T-cell (primary cell): ENCODE measurements at regions of chr3 and their contacts with region 1.

Region 1: DNA sequence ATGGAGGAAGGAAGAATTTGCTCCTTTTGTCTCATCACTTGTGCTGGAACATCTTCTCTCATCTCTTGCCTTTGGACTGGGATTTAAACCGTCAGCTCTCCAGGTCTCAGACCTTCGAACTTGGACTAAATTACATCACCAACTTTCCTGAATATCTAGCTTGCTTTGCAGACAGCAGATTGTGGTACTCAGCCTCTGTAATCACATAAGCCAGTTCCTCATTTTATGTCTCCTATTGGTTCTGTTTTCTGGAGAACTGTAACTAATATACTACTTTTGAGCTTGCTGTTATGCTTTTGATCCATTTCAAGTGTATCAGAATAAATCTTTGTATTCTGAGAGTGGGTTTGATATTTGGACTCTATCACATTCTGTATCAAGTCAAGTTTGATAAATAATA is 164.3 kb upstream of the VEPH1 start:
- DNase-seq: no peak
- ATAC-seq: no peak
- H3K4me3 ChIP-seq: no peak overlapping the region
- H3K4me3 Mint-ChIP-seq: no peak overlapping the region
- H3K27ac ChIP-seq: no peak overlapping the region
- H3K27ac Mint-ChIP-seq: no peak overlapping the region
- H3K4me1 ChIP-seq: no peaks in the 10 kb centered on the region
- H3K4me1 Mint-ChIP-seq: no peaks in the 10 kb centered on the region
- H3K27me3 ChIP-seq: no peaks in the 10 kb centered on the region
- H3K27me3 Mint-ChIP-seq: peaks cover 0 to 3% of the 10 kb centered on the region in 2 donors

Region 2: DNA sequence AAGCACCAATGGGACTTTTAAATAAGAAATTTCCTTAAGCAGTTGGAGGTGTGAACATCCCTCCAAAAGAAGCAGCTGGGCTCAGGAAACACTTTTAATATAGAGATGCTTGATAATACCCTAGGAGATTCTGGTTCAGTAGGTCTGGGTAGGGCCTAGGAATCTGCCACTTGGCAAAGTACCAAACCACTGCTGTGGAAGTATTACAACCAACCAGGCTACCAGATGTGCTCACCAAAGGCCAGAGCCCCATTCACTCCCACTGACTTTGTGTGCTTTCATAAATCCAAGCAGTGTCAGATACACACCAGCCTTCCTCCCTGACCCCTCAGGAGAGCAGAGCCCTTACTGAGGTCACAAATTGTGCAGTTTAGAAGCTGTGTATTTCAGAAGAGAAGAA is 670.1 kb before region 1 on chr3:
- CTCF ChIA-PET with region 1: no interaction called
- POLR2A ChIA-PET with region 1: no interaction called
- DNase-seq: no peak
- ATAC-seq: no peak
- H3K4me3 ChIP-seq: no peak overlapping the region
- H3K4me3 Mint-ChIP-seq: no peak overlapping the region
- H3K27ac ChIP-seq: no peak overlapping the region
- H3K27ac Mint-ChIP-seq: no peak overlapping the region
- H3K4me1 ChIP-seq: no peaks in the 10 kb centered on the region
- H3K4me1 Mint-ChIP-seq: no peaks in the 10 kb centered on the region
- H3K27me3 ChIP-seq: peaks cover 0 to 4% of the 10 kb centered on the region in 2 experiments
- H3K27me3 Mint-ChIP-seq: peaks cover 3 to 15% of the 10 kb centered on the region in 2 donors

Region 3: GRCh38 chr3:157683660-157684059 is 16.2 kb after region 1 on chr3:
- CTCF ChIA-PET with region 1: no interaction called
- POLR2A ChIA-PET with region 1: no interaction called
- DNase-seq: no peak
- ATAC-seq: no peak
- H3K4me3 ChIP-seq: no peak overlapping the region
- H3K4me3 Mint-ChIP-seq: no peak overlapping the region
- H3K27ac ChIP-seq: no peak overlapping the region
- H3K27ac Mint-ChIP-seq: no peak overlapping the region
- H3K4me1 ChIP-seq: no peaks in the 10 kb centered on the region
- H3K4me1 Mint-ChIP-seq: no peaks in the 10 kb centered on the region
- H3K27me3 ChIP-seq: no peaks in the 10 kb centered on the region
- H3K27me3 Mint-ChIP-seq: peaks cover 2 to 7% of the 10 kb centered on the region in 2 donors

Region 4: GRCh38 chr3:157700408-157700807 is 32.9 kb after region 1 on chr3:
- CTCF ChIA-PET with region 1: no interaction called
- POLR2A ChIA-PET with region 1: interaction called in 1 of 2 experiments, 10 read pairs
- DNase-seq: no peak
- ATAC-seq: no peak
- H3K4me3 ChIP-seq: no peak overlapping the region
- H3K4me3 Mint-ChIP-seq: no peak overlapping the region
- H3K27ac ChIP-seq: no peak overlapping the region
- H3K27ac Mint-ChIP-seq: no peak overlapping the region
- H3K4me1 ChIP-seq: no peaks in the 10 kb centered on the region
- H3K4me1 Mint-ChIP-seq: no peaks in the 10 kb centered on the region
- H3K27me3 ChIP-seq: no peaks in the 10 kb centered on the region
- H3K27me3 Mint-ChIP-seq: no peaks in the 10 kb centered on the region

Region 5: DNA sequence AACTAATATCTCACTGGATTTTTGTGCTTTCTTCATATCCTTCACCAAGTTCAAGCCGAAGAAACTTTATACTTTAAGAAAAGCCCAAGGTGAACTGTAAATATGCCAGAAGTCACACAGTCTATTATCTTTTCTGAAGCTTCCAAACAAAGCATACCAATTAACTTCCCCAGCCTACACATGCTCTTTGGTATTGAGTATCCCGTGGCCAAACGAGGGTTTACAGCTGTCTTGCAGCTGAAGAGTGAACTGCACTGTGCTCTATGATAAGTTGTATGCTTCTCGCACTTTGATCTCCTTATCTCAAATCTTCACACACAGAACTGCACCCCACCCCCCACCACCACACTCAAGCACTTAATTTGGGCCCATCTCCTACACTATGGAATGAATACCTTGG is 51.3 kb after region 1 on chr3:
- CTCF ChIA-PET with region 1: no interaction called
- POLR2A ChIA-PET with region 1: no interaction called
- DNase-seq: no peak
- ATAC-seq: no peak
- H3K4me3 ChIP-seq: no peak overlapping the region
- H3K4me3 Mint-ChIP-seq: no peak overlapping the region
- H3K27ac ChIP-seq: no peak overlapping the region
- H3K27ac Mint-ChIP-seq: no peak overlapping the region
- H3K4me1 ChIP-seq: no peaks in the 10 kb centered on the region
- H3K4me1 Mint-ChIP-seq: no peaks in the 10 kb centered on the region
- H3K27me3 ChIP-seq: no peaks in the 10 kb centered on the region
- H3K27me3 Mint-ChIP-seq: no peaks in the 10 kb centered on the region